ENCODE measurements at regions of chr19 and their contacts with region 1.

Region 1: GRCh38 chr19:16376649-16377048 is 52.0 kb downstream of the KLF2 start:
- DNase-seq: no peak
- H3K4me3 ChIP-seq: no peak overlapping the region
- H3K27ac ChIP-seq: no peak overlapping the region
- H3K4me1 ChIP-seq: peaks cover 5 to 12% (median 11%) of the 10 kb centered on the region in 4 donors
- H3K27me3 ChIP-seq: no peaks in the 10 kb centered on the region
- CTCF ChIP-seq: no peak

Region 2: DNA sequence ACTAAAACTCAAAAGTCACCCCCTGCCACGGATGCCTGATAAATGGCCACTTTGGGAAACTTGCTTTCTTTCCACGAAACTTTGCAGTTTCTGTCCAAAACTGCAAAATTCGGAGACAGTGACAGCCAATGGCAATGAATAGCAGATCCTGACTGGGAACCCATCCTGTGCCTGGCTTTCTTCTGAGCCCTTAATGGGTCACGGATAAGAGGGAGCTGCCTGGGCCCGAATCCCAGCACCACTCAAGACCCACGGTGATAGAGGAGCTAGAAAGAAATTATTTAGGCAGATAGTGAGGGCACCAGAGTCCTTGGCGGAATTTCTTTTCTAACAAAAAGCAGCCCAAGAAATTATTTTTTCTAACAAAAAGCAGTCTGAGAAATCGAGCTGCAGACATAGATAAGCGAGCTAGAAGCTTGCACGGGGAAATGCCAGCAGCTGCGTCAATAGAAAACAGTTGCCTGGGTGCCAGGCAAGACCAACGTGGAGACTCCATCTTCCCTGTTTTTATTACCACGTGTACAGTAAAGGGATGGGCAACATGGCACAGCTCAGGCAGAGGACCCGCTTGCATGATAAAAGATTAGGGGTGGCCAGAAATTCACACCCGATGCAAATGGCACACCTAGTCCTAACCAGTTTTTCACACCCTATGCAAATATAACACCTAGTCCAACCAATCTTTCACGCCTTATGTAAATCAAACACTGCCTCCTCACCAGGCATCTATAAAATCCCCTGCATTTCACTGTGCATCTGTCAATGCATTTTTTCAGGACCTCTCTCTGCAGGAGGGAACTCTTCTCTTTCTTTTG is 240.3 kb before region 1 on chr19:
- intact Hi-C with region 1: no loop called
- DNase-seq: no peak
- H3K4me3 ChIP-seq: no peak overlapping the region
- H3K27ac ChIP-seq: no peak overlapping the region
- H3K4me1 ChIP-seq: no peaks in the 10 kb centered on the region
- H3K27me3 ChIP-seq: no peaks in the 10 kb centered on the region
- CTCF ChIP-seq: no peak

Region 3: DNA sequence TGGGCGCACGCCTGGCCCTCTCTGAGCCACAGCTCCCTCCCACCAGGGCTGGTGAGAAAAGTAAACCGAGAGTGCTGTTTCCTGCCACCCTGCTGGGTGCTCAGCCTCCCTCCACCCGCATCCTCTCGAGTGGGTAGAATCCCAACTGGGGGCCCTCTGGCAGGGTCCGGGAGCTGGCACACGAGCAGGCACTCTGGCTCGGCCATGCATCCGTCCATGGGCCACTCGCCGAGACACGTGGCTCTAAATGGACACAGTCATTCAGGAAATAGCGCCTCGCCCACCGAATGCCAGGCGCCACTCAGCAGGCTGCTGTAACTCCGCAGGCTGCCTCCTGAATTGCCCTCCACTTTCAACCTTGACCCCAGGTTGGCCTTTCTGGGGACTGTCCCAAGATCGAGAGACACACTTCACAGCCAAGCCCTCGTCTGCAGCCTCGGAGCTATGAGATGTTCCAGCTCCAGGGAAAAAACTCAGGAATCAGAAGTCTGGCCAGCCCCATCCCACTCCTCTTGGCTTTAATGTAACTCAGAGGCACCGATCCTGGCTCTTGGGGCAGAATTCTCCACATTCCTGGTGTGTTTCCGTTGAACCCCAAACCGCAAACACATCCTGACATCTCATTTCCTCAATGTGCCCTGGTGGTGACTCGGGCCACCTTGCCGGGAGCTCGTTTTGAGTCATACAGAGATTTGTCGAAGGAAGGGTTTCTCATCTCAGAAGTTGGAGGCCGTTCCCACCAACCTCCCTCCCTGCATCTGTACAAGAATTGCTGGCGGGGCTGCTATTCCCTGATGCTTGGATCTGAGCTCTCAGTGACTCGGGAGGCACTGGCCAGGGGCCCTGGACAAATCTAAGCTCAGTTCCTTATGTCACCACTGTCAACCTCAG is 37.9 kb before region 1 on chr19:
- intact Hi-C with region 1: loop called (anchors 5 kb)
- DNase-seq: peak in 1 of 2 donors; percentile 56
- H3K4me3 ChIP-seq: peak overlapping the region in 1 of 2 donors; percentile 17
- H3K27ac ChIP-seq: peak overlapping the region; percentile 59 to 71
- H3K4me1 ChIP-seq: peaks cover 3 to 36% (median 27%) of the 10 kb centered on the region in 4 donors
- H3K27me3 ChIP-seq: no peaks in the 10 kb centered on the region
- CTCF ChIP-seq: peak in 1 of 2 experiments; percentile 24

Measured in tibial artery (tissue), 4 donors.